ENCODE measurements at regions of chr14 and their contacts with region 1.

Region 1: DNA sequence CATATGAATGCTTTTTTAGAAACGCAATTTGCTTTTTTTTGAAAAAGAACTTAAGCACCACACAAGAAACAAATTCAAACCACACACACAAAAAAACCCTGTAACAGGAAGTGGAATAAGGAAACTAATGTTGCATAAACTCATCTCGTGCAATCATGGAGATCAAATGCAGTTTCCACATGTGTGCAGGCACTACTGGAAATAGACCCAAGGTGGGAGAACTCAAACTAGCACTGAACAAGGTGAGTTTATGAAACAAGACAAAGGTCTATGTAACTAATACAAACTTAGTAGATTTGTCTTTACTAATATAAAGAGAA is 17.5 kb downstream of the NIN start:
- DNase-seq: peak; percentile 45
- H3K4me3 Mint-ChIP-seq: peak overlapping the region; percentile 75
- H3K27ac Mint-ChIP-seq: peak overlapping the region; percentile 98
- H3K4me1 Mint-ChIP-seq: peaks cover 55% of the 10 kb centered on the region
- H3K27me3 Mint-ChIP-seq: no peaks in the 10 kb centered on the region

Region 2: GRCh38 chr14:49598485-49599300 is 1214.8 kb before region 1 on chr14 and contains the start of gene LRR1:
- CTCF ChIA-PET with region 1: no interaction called
- intact Hi-C with region 1: loop called (anchors 10 kb)
- DNase-seq: peak; percentile 87
- H3K4me3 Mint-ChIP-seq: peak within 1 kb of the TSS; percentile 99
- H3K27ac Mint-ChIP-seq: peak within 1 kb of the TSS; percentile 99
- H3K4me1 Mint-ChIP-seq: peaks cover 20% of the 10 kb centered on the region
- H3K27me3 Mint-ChIP-seq: no peaks in the 10 kb centered on the region
- total RNA-seq, gene LRR1: 47.7 to 49.1 TPM

Region 3: GRCh38 chr14:50736932-50737419 is 76.5 kb before region 1 on chr14:
- CTCF ChIA-PET with region 1: no interaction called
- intact Hi-C with region 1: no loop called
- DNase-seq: peak; percentile 58
- H3K4me3 Mint-ChIP-seq: no peak overlapping the region
- H3K27ac Mint-ChIP-seq: no peak overlapping the region
- H3K4me1 Mint-ChIP-seq: peaks cover 38% of the 10 kb centered on the region
- H3K27me3 Mint-ChIP-seq: no peaks in the 10 kb centered on the region

Region 4: DNA sequence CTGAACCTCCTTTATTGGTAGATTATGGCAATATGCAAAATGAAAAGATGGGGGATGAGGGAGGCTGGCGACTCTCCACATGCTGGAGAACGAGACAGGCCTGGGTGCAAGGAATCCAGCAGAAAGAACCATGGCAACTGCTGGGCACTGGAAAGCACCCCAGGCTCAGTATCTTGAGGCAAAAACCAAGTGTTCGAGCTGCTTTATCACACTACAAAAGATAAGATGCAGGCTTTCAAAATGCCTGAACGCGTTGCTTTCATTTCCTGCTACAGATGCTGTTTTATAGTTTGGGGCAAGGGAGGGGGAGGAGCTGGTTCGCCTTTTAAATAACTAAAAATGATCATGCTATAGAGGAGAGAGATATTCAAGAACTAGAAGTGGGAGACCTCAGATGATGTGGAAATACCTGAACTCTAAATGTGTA is 21.4 kb before region 1 on chr14:
- CTCF ChIA-PET with region 1: interaction called, 5 read pairs
- intact Hi-C with region 1: loop called (anchors 1 kb)
- DNase-seq: peak; percentile 47
- H3K4me3 Mint-ChIP-seq: peak overlapping the region; percentile 68
- H3K27ac Mint-ChIP-seq: peak overlapping the region; percentile 79
- H3K4me1 Mint-ChIP-seq: peaks cover 77% of the 10 kb centered on the region
- H3K27me3 Mint-ChIP-seq: no peaks in the 10 kb centered on the region

Region 5: GRCh38 chr14:50830932-50831725 is 17.6 kb after region 1 on chr14 and contains the start of gene NIN:
- CTCF ChIA-PET with region 1: interaction called, 4 read pairs
- intact Hi-C with region 1: loop called (anchors 1 kb)
- DNase-seq: peak; percentile 69
- H3K4me3 Mint-ChIP-seq: peak within 1 kb of the TSS; percentile 88
- H3K27ac Mint-ChIP-seq: peak within 1 kb of the TSS; percentile 83
- H3K4me1 Mint-ChIP-seq: peaks cover 62% of the 10 kb centered on the region
- H3K27me3 Mint-ChIP-seq: no peaks in the 10 kb centered on the region
- total RNA-seq, gene NIN: 56.9 to 57.9 TPM